HepG2 (cell line): ENCODE measurements at regions of chr17 and their contacts with region 1.

Region 1: DNA sequence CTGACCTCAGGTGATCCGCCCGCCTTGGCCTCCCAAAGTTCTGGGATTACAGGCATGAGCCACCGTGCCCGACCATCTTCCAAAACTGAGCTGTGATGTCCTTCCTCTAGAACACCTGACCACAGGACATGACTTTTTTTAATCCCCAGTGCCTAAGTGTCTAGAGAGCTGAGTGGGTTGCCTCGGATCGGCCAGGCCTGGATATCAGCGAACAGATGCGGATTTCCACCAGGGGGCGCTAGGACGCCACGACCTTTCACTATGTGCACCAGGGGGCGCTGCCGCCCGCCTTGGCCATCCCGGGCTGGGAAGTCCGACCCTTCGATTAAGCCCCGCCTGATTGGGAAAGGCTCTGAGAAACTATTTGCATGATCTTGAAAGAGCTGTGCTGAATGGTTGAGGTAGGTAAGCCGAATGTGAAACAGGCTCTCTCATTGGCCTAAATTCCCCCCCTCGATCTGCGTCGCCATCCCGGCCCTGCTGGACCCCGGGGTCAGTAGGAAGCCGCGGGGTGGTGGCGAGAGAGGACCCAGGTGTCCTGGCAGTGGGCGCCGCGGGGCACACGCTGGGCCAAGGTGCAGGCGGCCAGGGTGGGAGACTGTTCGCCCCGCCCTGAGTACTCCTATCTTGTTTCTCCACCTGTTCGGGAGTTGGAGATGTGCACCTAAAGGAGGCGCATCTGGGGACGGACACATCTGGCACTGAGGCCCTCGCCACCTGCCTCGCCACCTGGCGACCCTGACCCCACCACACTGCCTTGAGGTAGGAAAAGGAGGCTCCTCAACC is at the start of gene ACBD4:
- DNase-seq: peak; percentile 100
- ATAC-seq: peak; percentile 85
- H3K4me3 ChIP-seq: peak within 1 kb of the TSS; percentile 70 to 83 (median 78)
- H3K27ac ChIP-seq: peak within 1 kb of the TSS; percentile 64
- H3K4me1 ChIP-seq: peaks cover 43% of the 10 kb centered on the region
- H3K27me3 ChIP-seq: no peaks in the 10 kb centered on the region
- CTCF ChIP-seq: peak; percentile 100
- EP300 ChIP-seq: peak in 1 of 2 experiments; percentile 41; a peak in 2 of 4 replicates
- POLR2A ChIP-seq: peak; percentile 71 to 97
- RAD21 ChIP-seq: peak; percentile 100
- total RNA-seq, gene ACBD4: 8.8 and 16.1 TPM in 2 replicates

Region 2: GRCh38 chr17:45108595-45109521 is 26.5 kb before region 1 on chr17:
- CTCF ChIA-PET with region 1: interaction called, 12 read pairs
- POLR2A ChIA-PET with region 1: interaction called, 14 read pairs
- in situ Hi-C with region 1: no loop called
- intact Hi-C with region 1: no loop called
- DNase-seq: no peak
- ATAC-seq: peak; percentile 21
- H3K4me3 ChIP-seq: no peak overlapping the region
- H3K27ac ChIP-seq: peak overlapping the region; percentile 4
- H3K4me1 ChIP-seq: peaks cover 45% of the 10 kb centered on the region
- H3K27me3 ChIP-seq: no peaks in the 10 kb centered on the region
- CTCF ChIP-seq: peak; percentile 58
- EP300 ChIP-seq: no peak
- POLR2A ChIP-seq: no peak
- RAD21 ChIP-seq: peak; percentile 60

Region 3: GRCh38 chr17:45161019-45161825 is 25.8 kb after region 1 on chr17:
- CTCF ChIA-PET with region 1: interaction called, 11 read pairs
- POLR2A ChIA-PET with region 1: interaction called, 48 read pairs
- in situ Hi-C with region 1: no loop called
- intact Hi-C with region 1: no loop called
- DNase-seq: peak; percentile 100
- ATAC-seq: peak; percentile 75
- H3K4me3 ChIP-seq: peak overlapping the region; percentile 74 to 93 (median 92)
- H3K27ac ChIP-seq: peak overlapping the region; percentile 98
- H3K4me1 ChIP-seq: peaks cover 59% of the 10 kb centered on the region
- H3K27me3 ChIP-seq: no peaks in the 10 kb centered on the region; a peak in 1 of 5 replicates
- CTCF ChIP-seq: no peak
- EP300 ChIP-seq: peak in 1 of 2 experiments; percentile 52; a peak in 3 of 4 replicates
- POLR2A ChIP-seq: peak; percentile 76 to 88
- RAD21 ChIP-seq: peak; percentile 6

Region 4: GRCh38 chr17:45197555-45198334 is 62.4 kb after region 1 on chr17:
- CTCF ChIA-PET with region 1: interaction called, 303 read pairs
- POLR2A ChIA-PET with region 1: interaction called, 60 read pairs
- in situ Hi-C with region 1: no loop called
- intact Hi-C with region 1: loop called (anchors 1 kb)
- DNase-seq: peak; percentile 92
- ATAC-seq: peak; percentile 91
- H3K4me3 ChIP-seq: peak overlapping the region; percentile 33 to 63 (median 41); a peak in 5 of 6 replicates
- H3K27ac ChIP-seq: peak overlapping the region; percentile 39
- H3K4me1 ChIP-seq: peaks cover 71% of the 10 kb centered on the region
- H3K27me3 ChIP-seq: no peaks in the 10 kb centered on the region
- CTCF ChIP-seq: peak; percentile 100
- EP300 ChIP-seq: peak; percentile 7 to 69; a peak in 2 of 4 replicates
- POLR2A ChIP-seq: no peak
- RAD21 ChIP-seq: peak; percentile 100

Region 5: DNA sequence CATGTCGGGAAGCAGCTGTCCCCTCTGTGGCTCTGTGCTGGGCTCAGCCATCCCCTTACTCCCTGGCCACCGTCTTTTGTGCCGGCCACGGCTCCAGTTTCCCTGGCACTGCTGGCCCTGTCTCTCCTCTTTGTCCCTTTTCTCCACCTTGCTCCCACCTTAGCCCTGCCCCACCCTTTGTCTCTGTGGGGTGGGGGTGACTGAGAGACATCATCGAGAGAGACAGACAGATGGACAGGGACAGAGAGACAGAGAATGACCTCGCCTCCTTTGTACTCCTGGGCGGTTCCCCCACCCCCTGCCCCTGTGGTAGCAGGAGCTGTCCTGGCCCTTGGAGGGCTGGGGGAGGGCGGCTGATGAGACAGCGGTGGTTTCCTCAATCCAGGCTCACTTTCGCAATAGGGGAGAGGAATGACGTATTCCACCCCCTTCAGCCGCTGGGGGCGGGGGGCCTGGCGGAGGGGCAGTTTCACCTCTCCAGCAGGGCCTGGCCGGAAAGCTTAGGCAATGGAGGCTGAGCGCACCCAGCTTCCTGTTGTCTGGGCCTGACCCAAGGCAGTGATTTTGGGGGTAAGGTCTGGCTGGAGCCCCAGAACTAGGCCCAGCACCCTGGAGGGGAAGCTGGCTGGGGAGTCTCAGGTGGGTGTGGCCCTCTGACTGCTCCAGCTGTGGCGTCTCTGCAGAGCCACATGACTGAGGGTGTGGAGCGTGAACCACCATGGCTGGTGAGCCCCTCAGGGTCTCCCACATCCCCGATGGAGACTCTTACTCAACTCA is 93.6 kb after region 1 on chr17:
- CTCF ChIA-PET with region 1: interaction called, 31 read pairs
- POLR2A ChIA-PET with region 1: interaction called, 15 read pairs
- in situ Hi-C with region 1: no loop called
- intact Hi-C with region 1: loop called (anchors 5 kb)
- DNase-seq: peak; percentile 56
- ATAC-seq: peak; percentile 3; the same call in 2 of the 3 replicates
- H3K4me3 ChIP-seq: peak overlapping the region; percentile 7 to 62 (median 19); a peak in 4 of 6 replicates
- H3K27ac ChIP-seq: no peak overlapping the region
- H3K4me1 ChIP-seq: peaks cover 71% of the 10 kb centered on the region
- H3K27me3 ChIP-seq: peaks cover 10 to 40% of the 10 kb centered on the region in 2 experiments; a peak in 4 of 5 replicates
- CTCF ChIP-seq: no peak
- EP300 ChIP-seq: no peak
- POLR2A ChIP-seq: no peak
- RAD21 ChIP-seq: no peak

Region 6: GRCh38 chr17:45247429-45248131 is 112.2 kb after region 1 on chr17:
- CTCF ChIA-PET with region 1: no interaction called
- POLR2A ChIA-PET with region 1: no interaction called
- in situ Hi-C with region 1: no loop called
- intact Hi-C with region 1: no loop called
- DNase-seq: peak; percentile 89
- ATAC-seq: peak; percentile 87
- H3K4me3 ChIP-seq: peak overlapping the region; percentile 80 to 84 (median 84)
- H3K27ac ChIP-seq: no peak overlapping the region
- H3K4me1 ChIP-seq: peaks cover 40% of the 10 kb centered on the region
- H3K27me3 ChIP-seq: peaks cover under 1 to 34% of the 10 kb centered on the region in 2 experiments; a peak in 4 of 5 replicates
- CTCF ChIP-seq: no peak
- EP300 ChIP-seq: no peak
- POLR2A ChIP-seq: peak; percentile 44 to 62; a peak in 3 of 4 replicates
- RAD21 ChIP-seq: 0 out of 2 replicates have a peak, but pooled peaks have one; percentile 7

Region 7: DNA sequence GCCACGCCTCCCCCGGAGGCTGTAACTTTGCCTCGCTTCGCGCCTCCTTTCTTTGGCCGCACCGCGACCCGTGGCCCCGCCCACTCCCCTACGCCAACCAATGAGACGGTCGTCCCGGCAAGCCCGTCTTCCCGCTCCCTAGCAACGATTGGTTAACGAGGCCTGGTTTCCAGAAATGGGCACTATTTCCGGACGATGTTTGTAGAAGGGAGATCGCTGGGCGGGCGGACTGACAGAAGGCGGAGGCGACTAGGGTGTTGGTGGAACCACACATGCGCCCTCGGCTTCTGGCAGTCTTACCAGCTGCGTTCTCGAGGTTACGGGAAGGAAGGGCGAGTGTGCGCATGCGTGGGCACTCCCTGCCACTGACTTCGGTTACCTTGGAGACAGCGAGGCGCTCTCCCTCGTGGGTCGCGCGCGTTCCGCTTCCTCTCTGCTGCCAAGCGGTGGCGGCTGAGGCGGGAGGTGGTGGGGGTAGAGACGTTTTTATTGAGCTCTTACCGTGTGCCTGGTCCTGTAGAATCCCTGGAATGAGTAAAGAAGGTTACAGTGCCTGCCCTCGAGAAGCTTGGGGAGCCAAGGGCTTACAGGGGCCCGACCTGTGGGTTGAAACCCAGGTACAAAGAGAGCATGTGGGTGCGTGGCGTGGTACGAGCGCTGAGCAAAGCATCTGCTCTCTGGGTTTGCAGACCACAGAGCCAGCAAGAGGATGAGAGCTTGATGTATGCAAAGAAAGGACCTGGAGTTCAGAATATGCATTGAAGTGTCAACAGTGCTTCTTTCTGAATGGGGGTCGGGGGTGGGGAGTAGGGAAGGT is 181.9 kb after region 1 on chr17:
- CTCF ChIA-PET with region 1: no interaction called
- POLR2A ChIA-PET with region 1: no interaction called
- in situ Hi-C with region 1: no loop called
- intact Hi-C with region 1: loop called (anchors 2 kb)
- DNase-seq: peak; percentile 100
- ATAC-seq: peak; percentile 88
- H3K4me3 ChIP-seq: peak overlapping the region; percentile 43 to 86 (median 67)
- H3K27ac ChIP-seq: peak overlapping the region; percentile 47
- H3K4me1 ChIP-seq: peaks cover 59% of the 10 kb centered on the region
- H3K27me3 ChIP-seq: peaks cover 2 to 36% of the 10 kb centered on the region in 2 experiments; a peak in 3 of 5 replicates
- CTCF ChIP-seq: peak; percentile 37
- EP300 ChIP-seq: no peak; a peak in 1 of 4 replicates
- POLR2A ChIP-seq: peak in 1 of 2 experiments; percentile 24; a peak in 1 of 4 replicates
- RAD21 ChIP-seq: 0 out of 2 replicates have a peak, but pooled peaks have one; percentile 28

Region 8: DNA sequence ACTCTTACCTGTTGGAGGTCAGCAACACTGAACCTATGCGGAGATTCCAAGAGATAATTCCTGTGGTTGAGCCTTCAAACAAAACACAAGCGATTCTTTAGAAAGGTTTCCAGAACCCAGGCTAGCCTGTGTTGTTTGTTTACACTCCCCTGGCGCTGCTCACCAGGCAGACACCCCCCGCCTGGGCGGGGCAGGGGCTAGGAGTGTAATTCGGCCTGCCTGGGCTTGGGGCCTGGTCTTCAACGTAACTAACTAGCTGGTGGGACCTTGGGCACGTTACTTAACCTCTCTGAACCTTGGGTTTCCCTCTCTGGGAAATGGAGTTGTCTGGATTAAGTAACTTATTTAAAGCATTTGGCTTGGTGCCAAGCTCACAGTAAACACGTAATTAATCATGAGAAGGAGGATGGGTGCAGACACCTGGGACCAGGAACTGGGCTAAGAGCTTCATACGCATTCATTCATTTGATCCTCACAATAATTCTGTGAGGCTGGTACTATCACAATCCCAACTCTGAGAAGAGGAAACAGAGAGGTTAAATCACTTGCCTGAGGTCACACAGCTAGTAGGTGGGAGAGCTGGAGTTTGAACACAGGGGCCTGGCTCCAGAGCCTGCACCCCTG is 304.9 kb after region 1 on chr17:
- CTCF ChIA-PET with region 1: no interaction called
- POLR2A ChIA-PET with region 1: no interaction called
- in situ Hi-C with region 1: no loop called
- intact Hi-C with region 1: no loop called
- DNase-seq: peak; percentile 72
- ATAC-seq: peak; percentile 26; the same call in 2 of the 3 replicates
- H3K4me3 ChIP-seq: no peak overlapping the region
- H3K27ac ChIP-seq: no peak overlapping the region
- H3K4me1 ChIP-seq: peaks cover 14% of the 10 kb centered on the region
- H3K27me3 ChIP-seq: no peaks in the 10 kb centered on the region
- CTCF ChIP-seq: no peak
- EP300 ChIP-seq: no peak
- POLR2A ChIP-seq: no peak
- RAD21 ChIP-seq: no peak